ENCODE measurements at regions of chr1 and their contacts with region 1.

Region 1: GRCh38 chr1:44213222-44214112 is at the start of gene DMAP1:
- DNase-seq: peak; percentile 92
- ATAC-seq: peak; percentile 91
- total RNA-seq, gene DMAP1: 27.5 TPM

Region 2: GRCh38 chr1:44103270-44104131 is 110.0 kb before region 1 on chr1:
- intact Hi-C with region 1: no loop called
- DNase-seq: no peak
- ATAC-seq: no peak

Region 3: DNA sequence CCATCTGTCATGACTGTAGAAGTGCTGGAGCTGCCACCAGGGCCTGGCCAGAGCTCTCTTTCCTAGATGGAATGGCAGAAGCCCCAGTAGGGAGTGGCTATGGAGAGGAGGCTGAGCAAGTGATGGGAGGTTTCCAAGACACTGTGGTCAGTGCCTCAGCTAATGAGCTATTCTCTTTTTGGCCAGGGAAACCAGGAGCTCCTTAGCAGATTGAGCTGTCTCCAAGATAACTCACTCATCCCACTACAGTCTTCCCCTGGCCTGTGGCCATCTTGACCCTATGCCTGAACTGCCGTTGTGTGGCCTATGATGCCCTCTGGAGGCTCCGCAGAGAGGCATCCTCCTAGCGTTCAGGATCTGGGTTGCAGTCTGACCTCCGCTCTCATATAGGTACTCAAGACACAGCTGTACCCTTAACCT is 81.1 kb after region 1 on chr1:
- intact Hi-C with region 1: loop called (anchors 5 kb)
- DNase-seq: peak; percentile 72
- ATAC-seq: no peak

Region 4: GRCh38 chr1:44318097-44319088 is 104.9 kb after region 1 on chr1:
- intact Hi-C with region 1: loop called (anchors 2 kb)
- DNase-seq: no peak
- ATAC-seq: no peak

Region 5: DNA sequence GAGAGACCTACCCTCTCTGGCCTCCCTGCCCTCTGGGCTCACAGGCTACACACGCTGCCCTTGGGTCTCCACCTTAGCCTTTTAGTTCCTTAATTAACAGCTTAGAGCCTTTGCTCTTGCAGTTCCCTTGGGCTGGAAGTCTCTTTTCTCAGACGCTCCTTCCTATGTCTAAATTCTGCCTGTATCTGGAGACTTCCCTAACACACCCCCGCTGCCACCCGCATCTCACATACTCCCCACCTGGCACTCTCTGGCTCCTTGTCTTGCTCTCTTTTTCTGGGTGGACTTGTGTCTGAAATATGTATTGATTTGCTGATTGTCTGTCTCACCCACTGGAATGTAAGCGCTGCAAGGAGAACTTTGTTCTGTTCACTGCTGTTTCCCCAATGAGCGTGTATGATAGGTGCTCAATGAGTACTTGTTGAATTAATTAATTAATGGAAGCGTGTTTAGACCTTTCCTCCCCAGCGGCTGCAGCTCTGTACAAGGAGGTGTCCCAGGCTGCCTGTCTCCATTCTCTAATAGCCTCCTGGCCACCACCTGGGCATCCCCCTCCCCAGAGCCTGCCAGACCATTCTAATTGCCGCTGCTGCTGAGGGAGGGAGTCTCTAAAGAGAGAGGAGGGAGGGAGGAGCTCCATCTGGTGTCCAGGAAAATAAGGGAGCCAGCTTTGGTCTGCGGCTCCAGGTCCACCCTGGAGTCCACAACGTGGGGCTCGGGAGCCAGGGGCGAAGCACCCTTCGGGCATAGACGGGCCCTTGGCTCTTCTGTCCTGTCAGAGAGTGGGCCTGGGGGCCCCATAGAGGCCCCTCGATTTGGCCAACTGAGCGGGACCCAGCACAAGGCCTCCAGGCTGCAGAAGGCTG is 286.9 kb after region 1 on chr1:
- intact Hi-C with region 1: loop called (anchors 10 kb)
- DNase-seq: no peak
- ATAC-seq: peak; percentile 58

Region 6: DNA sequence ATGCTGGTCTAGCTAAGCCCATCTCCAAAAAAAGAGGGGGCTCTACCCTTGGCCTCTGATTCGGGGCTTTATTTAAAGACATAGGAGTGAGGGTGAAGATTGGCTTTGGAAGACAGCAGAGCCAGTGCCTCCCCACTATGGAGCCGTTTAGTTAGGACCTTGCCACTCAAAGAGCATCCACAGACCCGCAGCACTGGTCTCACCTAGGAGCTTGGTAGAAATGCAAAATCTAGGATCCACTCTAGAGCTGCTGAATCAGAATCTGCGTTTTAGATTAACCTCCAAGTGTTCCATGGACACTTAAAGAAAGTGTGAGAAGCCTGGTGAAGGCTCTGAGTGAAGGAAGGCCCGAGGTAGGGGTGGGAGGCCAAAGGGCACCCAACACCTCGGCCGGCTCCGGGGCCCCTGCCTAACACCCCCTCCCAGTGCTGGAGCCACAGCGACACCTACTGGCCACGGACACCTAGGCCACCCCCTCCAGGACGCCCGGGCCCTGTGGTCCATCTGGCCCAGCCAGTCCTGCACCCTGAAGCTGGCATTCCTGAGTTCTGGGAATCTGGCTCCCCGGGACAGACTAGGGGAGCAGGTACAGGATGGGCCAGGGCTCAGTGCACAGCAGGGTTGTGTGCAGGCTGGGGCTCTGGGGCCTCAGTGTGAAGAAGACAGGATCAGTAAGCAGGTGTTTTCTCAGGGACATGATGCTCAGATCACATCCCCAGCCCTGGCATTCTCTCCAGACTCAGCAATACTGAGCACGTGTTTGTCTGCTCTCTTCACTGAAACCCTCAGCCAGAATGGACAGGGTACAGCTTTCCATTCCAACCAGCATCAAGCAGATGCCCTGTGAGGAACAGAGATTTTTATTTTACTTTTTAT is 381.6 kb after region 1 on chr1:
- intact Hi-C with region 1: loop called (anchors 1 kb)
- DNase-seq: peak; percentile 94
- ATAC-seq: peak; percentile 91

Region 7: DNA sequence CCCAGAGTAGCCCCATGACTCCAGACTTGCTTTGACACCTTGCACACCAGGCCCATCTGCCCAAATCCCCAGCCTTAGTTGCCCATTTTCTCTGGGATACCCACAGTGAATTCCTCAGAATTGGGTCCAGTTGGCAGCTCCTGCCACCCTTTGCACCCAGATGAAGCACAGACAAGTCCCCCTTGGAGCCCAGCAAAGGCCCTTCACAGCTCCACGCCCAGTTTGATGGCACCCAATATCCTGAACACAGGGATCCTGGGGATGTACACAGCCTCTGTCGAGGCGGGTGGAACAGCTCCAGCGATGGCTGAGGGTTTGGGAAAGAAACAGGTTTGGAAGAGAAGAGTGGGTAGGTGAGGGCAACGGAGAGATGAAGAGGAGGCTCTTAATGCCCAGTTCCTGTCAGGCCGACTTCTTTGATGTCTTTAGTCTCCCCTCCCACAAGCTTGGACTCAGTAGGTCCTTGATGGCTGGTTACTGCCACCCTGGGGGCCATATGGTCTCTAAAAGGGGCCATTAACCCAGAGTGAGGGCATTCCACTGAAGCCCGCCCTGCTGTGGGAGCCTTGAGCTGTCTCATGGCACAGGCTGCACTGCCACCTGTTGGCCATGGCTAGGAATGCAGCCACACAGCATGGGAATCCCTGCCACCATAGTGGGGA is 439.1 kb after region 1 on chr1:
- intact Hi-C with region 1: loop called (anchors 10 kb)
- DNase-seq: peak; percentile 84
- ATAC-seq: peak; percentile 79

Measured in Right ventricle myocardium inferior (tissue), 1 donor.